ENCODE measurements at regions of chr14 and their contacts with region 1.

Region 1: GRCh38 chr14:87067597-87067996 is 925.4 kb downstream of the GALC start:
- DNase-seq: no peak
- ATAC-seq: no peak
- H3K4me3 ChIP-seq: no peak overlapping the region
- H3K4me3 Mint-ChIP-seq: no peak overlapping the region
- H3K27ac ChIP-seq: no peak overlapping the region
- H3K27ac Mint-ChIP-seq: no peak overlapping the region
- H3K4me1 ChIP-seq: no peaks in the 10 kb centered on the region
- H3K4me1 Mint-ChIP-seq: no peaks in the 10 kb centered on the region
- H3K27me3 ChIP-seq: no peaks in the 10 kb centered on the region
- H3K27me3 Mint-ChIP-seq: no peaks in the 10 kb centered on the region
- CTCF ChIP-seq: no peak

Region 2: DNA sequence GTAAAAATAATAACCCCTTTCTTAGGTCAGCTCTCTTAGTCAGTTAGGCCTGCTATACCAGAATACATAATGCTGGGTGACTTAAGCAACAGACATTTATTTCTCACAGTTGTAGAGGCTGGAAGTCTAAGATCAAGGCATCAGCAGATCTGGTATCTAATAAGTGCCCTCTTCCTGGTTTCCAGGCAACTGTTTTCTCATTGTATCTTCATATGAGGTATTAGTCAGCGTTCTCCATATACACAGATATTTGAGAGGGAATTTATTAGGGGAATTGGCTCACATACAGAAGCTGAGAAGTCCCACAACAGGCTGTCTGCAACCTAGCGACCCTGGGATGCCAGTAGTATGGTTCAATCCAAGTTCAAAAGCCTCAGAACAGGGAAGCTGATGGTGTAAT is 29.4 kb after region 1 on chr14:
- CTCF ChIA-PET with region 1: no interaction called
- POLR2A ChIA-PET with region 1: no interaction called
- intact Hi-C with region 1: loop called in 1 of 2 experiments (anchors 1 kb)
- DNase-seq: no peak
- ATAC-seq: no peak
- H3K4me3 ChIP-seq: no peak overlapping the region
- H3K4me3 Mint-ChIP-seq: no peak overlapping the region
- H3K27ac ChIP-seq: no peak overlapping the region
- H3K27ac Mint-ChIP-seq: no peak overlapping the region
- H3K4me1 ChIP-seq: no peaks in the 10 kb centered on the region
- H3K4me1 Mint-ChIP-seq: no peaks in the 10 kb centered on the region
- H3K27me3 ChIP-seq: no peaks in the 10 kb centered on the region
- H3K27me3 Mint-ChIP-seq: no peaks in the 10 kb centered on the region
- CTCF ChIP-seq: no peak